CD14-positive monocyte (primary cell): ENCODE measurements at regions of chr11 and their contacts with region 1.

Region 1: DNA sequence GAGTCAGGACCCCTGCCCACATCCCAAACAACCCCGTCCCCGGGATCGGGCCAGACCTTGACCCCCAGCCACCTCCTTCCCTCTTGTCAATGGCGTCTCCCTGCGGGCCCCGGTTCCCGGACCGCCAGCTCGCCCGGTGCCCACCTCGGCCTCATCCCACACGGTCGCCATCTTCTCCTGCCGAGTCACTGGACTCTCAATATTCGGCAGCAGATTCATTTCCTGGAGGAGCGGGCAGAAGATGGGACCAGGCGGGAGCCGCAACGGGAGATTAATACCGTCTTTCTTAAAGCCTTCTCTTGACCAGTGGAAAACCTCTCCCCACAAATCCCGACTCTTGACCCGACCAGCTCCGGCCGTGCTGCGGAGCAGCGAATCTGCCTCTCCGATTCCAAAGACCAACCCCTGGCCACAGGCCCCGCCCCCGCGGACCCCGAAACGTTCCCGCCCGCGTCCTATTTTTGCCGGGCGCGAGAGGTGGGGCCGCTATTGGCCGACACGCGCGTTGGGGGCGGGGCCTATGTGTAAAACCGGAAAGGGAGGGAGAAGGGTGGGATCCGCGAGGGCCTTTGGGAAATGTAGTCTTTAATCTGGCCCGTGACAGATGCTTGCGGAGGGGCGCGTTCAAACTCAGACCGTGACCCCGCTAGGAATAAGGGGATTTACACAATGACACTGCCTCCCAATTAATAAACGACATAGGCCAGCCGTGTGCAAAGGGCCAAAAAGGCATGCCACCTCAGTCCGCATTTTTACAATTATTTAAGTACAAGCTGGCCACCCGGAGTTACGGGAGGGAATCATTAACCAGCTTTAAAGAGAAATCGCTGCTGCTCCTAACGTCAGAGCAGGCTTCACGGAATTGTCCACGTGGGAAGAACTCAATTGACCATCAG is at the start of gene PSMC3:
- DNase-seq: peak; percentile 92 to 96 (median 94)
- H3K4me3 ChIP-seq: peak within 1 kb of the TSS; percentile 89 to 99 (median 96)
- H3K4me3 Mint-ChIP-seq: peak within 1 kb of the TSS; percentile 99
- H3K27ac ChIP-seq: peak within 1 kb of the TSS; percentile 61 to 95
- H3K27ac Mint-ChIP-seq: peak within 1 kb of the TSS; percentile 90 to 99 (median 97)
- H3K4me1 ChIP-seq: peaks cover 13 to 20% of the 10 kb centered on the region in 2 donors
- H3K4me1 Mint-ChIP-seq: peaks cover 15% of the 10 kb centered on the region
- H3K27me3 ChIP-seq: no peaks in the 10 kb centered on the region
- H3K27me3 Mint-ChIP-seq: peaks cover 0 to 4% (median 1%) of the 10 kb centered on the region in 3 donors
- CTCF ChIP-seq: no peak
- polyA plus RNA-seq, gene PSMC3: 44.1 to 97.4 (median 89.5) TPM

Region 2: DNA sequence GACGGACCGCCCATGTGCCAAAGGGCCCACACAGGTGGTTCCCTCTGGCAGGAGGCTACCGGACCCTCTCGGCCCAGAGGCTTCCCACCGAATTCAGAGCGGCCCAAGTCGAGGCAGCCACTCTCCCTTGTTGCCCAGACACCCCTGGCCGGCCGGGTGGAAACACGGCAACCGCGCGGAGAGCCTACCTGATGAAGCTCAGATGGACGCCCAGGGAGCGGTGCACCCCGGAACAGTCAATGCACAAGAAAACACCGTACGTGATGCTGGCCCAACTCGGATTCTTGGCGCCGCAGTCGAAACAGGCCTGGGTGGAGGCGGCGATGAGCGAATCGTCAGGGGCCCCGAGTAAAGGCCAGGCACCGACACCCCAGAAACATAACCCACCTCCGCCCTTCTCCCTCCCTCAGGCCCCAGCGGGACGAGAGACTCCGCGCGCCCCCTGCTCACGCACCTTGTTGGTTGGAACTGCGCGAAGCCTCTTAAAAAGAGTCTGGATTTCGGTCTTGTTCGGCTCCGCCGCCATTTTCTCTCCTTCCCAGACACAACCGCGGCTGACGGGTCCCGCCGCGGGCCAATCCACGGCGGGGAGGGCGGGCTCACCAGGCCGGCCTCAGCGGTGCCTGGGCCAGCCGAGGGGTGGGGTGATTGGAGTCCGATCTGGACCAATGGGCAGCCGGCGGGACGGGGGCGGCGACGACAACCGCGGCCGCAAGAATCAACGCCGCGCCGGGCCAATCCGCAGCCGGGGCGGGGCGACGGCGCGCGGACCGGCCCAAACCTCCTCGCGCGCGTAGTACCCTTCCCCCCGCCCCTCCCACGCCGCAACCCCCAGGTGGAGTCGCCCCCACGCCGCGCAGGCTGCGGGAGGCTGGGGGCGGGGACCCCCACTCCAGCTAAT is 249.7 kb before region 1 on chr11 and contains the start of gene ARFGAP2:
- intact Hi-C with region 1: loop called in 1 of 2 experiments (anchors 5 kb)
- DNase-seq: peak; percentile 93 to 96 (median 94)
- H3K4me3 ChIP-seq: peak within 1 kb of the TSS; percentile 77 to 94 (median 93)
- H3K4me3 Mint-ChIP-seq: peak within 1 kb of the TSS; percentile 95 to 98
- H3K27ac ChIP-seq: peak within 1 kb of the TSS; percentile 90 to 95
- H3K27ac Mint-ChIP-seq: peak within 1 kb of the TSS; percentile 96 to 99 (median 98)
- H3K4me1 ChIP-seq: peaks cover 24 to 29% of the 10 kb centered on the region in 2 donors
- H3K4me1 Mint-ChIP-seq: peaks cover 22% of the 10 kb centered on the region
- H3K27me3 ChIP-seq: no peaks in the 10 kb centered on the region
- H3K27me3 Mint-ChIP-seq: peaks cover 0 to 2% (median 1%) of the 10 kb centered on the region in 3 donors
- CTCF ChIP-seq: no peak
- polyA plus RNA-seq, gene ARFGAP2: 59.7 to 129 (median 61.0) TPM

Region 3: GRCh38 chr11:47407746-47408590 is 18.3 kb before region 1 on chr11 and contains the start of gene SLC39A13:
- intact Hi-C with region 1: loop called in 1 of 2 experiments (anchors 1 kb)
- DNase-seq: peak; percentile 97 to 99 (median 98)
- H3K4me3 ChIP-seq: peak within 1 kb of the TSS; percentile 39 to 79 (median 50)
- H3K4me3 Mint-ChIP-seq: peak within 1 kb of the TSS; percentile 88 to 91
- H3K27ac ChIP-seq: peak within 1 kb of the TSS; percentile 94 to 100
- H3K27ac Mint-ChIP-seq: peak within 1 kb of the TSS; percentile 98 to 100 (median 98)
- H3K4me1 ChIP-seq: peaks cover 36 to 50% of the 10 kb centered on the region in 2 donors
- H3K4me1 Mint-ChIP-seq: peaks cover 33% of the 10 kb centered on the region
- H3K27me3 ChIP-seq: no peaks in the 10 kb centered on the region
- H3K27me3 Mint-ChIP-seq: peaks cover 0 to 1% (median under 1%) of the 10 kb centered on the region in 3 donors
- CTCF ChIP-seq: peak; percentile 99
- polyA plus RNA-seq, gene SLC39A13: 4.8 to 27.4 (median 5.9) TPM

Region 4: GRCh38 chr11:47578524-47579460 is 152.5 kb after region 1 on chr11 and contains the starts of genes KBTBD4 and NDUFS3:
- intact Hi-C with region 1: loop called in 1 of 2 experiments (anchors 5 kb)
- DNase-seq: peak; percentile 85 to 91 (median 88)
- H3K4me3 ChIP-seq: peak within 1 kb of the TSS; percentile 62 to 87 (median 83)
- H3K4me3 Mint-ChIP-seq: peak within 1 kb of the TSS; percentile 99 to 100
- H3K27ac ChIP-seq: peak within 1 kb of the TSS; percentile 57 to 89
- H3K27ac Mint-ChIP-seq: peak within 1 kb of the TSS; percentile 88 to 99 (median 98)
- H3K4me1 ChIP-seq: peaks cover 20 to 26% of the 10 kb centered on the region in 2 donors
- H3K4me1 Mint-ChIP-seq: peaks cover 26% of the 10 kb centered on the region
- H3K27me3 ChIP-seq: no peaks in the 10 kb centered on the region
- H3K27me3 Mint-ChIP-seq: no peaks in the 10 kb centered on the region
- CTCF ChIP-seq: no peak
- polyA plus RNA-seq, gene KBTBD4: 2.8 to 16.9 (median 13.8) TPM
- polyA plus RNA-seq, gene NDUFS3: 79.7 to 107 (median 104) TPM